ENCODE measurements at regions of chr9 and their contacts with region 1.

Region 1: DNA sequence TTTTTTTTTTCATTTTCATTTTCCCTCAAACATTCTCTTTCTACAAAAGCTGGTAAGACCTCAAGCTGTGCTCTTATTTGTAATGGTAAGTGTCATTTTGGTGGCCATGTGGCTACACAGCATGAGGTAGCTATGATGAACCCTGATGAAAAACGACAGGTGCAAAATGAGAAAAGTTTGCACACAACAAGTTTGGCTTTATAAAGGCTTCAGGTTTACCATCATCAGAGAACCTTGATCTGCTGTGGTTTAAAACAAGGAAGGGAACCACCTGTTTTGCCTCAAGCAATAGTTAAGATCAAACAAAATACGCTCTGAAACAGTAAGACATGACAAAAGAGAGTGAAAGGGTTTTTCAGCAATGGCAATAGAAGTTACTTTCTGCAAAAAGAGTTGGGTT is 1124.6 kb upstream of the ACO1 start:
- DNase-seq: peak in 7 of 9 donors; percentile 56 to 85 (median 80)
- ATAC-seq: peak; percentile 97
- H3K4me3 ChIP-seq: no peak overlapping the region
- H3K4me3 Mint-ChIP-seq: peak overlapping the region; percentile 15 to 72 (median 54)
- H3K27ac ChIP-seq: peak overlapping the region; percentile 19
- H3K27ac Mint-ChIP-seq: peak overlapping the region; percentile 3 to 96 (median 87)
- H3K4me1 ChIP-seq: peaks cover 0 to 16% of the 10 kb centered on the region in 2 donors
- H3K4me1 Mint-ChIP-seq: peaks cover 3 to 33% (median 20%) of the 10 kb centered on the region in 7 donors
- H3K27me3 ChIP-seq: no peaks in the 10 kb centered on the region
- H3K27me3 Mint-ChIP-seq: no peaks in the 10 kb centered on the region

Region 2: GRCh38 chr9:31210978-31211570 is 48.8 kb before region 1 on chr9:
- CTCF ChIA-PET with region 1: no interaction called
- POLR2A ChIA-PET with region 1: no interaction called
- intact Hi-C with region 1: loop called in 1 of 2 experiments (anchors 1 kb)
- DNase-seq: peak in 1 of 9 donors; percentile 9
- ATAC-seq: no peak
- H3K4me3 ChIP-seq: no peak overlapping the region
- H3K4me3 Mint-ChIP-seq: peak overlapping the region in 4 of 10 donors; percentile 45 to 67 (median 60)
- H3K27ac ChIP-seq: no peak overlapping the region
- H3K27ac Mint-ChIP-seq: peak overlapping the region in 2 of 9 donors; percentile 51 to 62
- H3K4me1 ChIP-seq: peaks cover 0 to 8% of the 10 kb centered on the region in 2 donors
- H3K4me1 Mint-ChIP-seq: peaks cover 4 to 47% (median 27%) of the 10 kb centered on the region in 7 donors
- H3K27me3 ChIP-seq: no peaks in the 10 kb centered on the region
- H3K27me3 Mint-ChIP-seq: no peaks in the 10 kb centered on the region

Region 3: GRCh38 chr9:31243386-31243785 is 16.4 kb before region 1 on chr9:
- CTCF ChIA-PET with region 1: no interaction called
- POLR2A ChIA-PET with region 1: interaction called, 5 read pairs
- intact Hi-C with region 1: loop called in 1 of 2 experiments (anchors 2 kb)
- DNase-seq: no peak
- ATAC-seq: no peak
- H3K4me3 ChIP-seq: no peak overlapping the region
- H3K4me3 Mint-ChIP-seq: no peak overlapping the region
- H3K27ac ChIP-seq: no peak overlapping the region
- H3K27ac Mint-ChIP-seq: peak overlapping the region in 1 of 9 donors; percentile 29
- H3K4me1 ChIP-seq: no peaks in the 10 kb centered on the region
- H3K4me1 Mint-ChIP-seq: peaks cover 0 to 11% (median 0%) of the 10 kb centered on the region in 7 donors
- H3K27me3 ChIP-seq: no peaks in the 10 kb centered on the region
- H3K27me3 Mint-ChIP-seq: no peaks in the 10 kb centered on the region

Region 4: GRCh38 chr9:32571969-32572899 is 1312.4 kb after region 1 on chr9:
- CTCF ChIA-PET with region 1: no interaction called
- POLR2A ChIA-PET with region 1: no interaction called
- intact Hi-C with region 1: loop called in 1 of 2 experiments (anchors 10 kb)
- DNase-seq: peak; percentile 33 to 85 (median 77)
- ATAC-seq: peak; percentile 92
- H3K4me3 ChIP-seq: peak overlapping the region; percentile 92
- H3K4me3 Mint-ChIP-seq: peak overlapping the region; percentile 98 to 100 (median 99)
- H3K27ac ChIP-seq: peak overlapping the region; percentile 86
- H3K27ac Mint-ChIP-seq: peak overlapping the region; percentile 93 to 99 (median 99)
- H3K4me1 ChIP-seq: peaks cover 14 to 22% of the 10 kb centered on the region in 2 donors
- H3K4me1 Mint-ChIP-seq: peaks cover 18 to 43% (median 30%) of the 10 kb centered on the region in 7 donors
- H3K27me3 ChIP-seq: no peaks in the 10 kb centered on the region
- H3K27me3 Mint-ChIP-seq: peaks cover 0 to 10% (median 0%) of the 10 kb centered on the region in 5 donors

Measured in naive thymus-derived CD4-positive, alpha-beta T cell (primary cell).